Gastrocnemius medialis (tissue), 4 donors: ENCODE measurements at regions of chr15 and their contacts with region 1.

Region 1: DNA sequence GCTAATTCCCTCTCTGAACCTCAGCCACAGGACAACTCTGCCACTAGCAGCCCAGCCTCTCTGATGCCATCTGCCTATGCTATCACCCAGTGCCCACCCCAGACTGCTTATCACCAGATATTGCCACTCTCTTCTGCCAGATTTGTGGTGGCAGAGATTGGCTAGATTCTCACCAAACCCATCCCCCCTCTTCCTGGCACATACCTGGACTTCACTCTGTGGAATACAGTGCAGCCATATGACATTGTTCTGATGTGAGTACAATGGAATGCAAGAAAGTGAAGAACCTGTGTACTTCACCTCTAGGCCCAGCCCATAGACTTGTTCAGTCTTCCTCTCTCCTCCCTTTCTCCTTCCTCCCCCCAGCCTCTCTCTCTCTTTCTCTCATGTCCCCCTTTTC is 46.9 kb upstream of the NTRK3 start:
- DNase-seq: no peak
- ATAC-seq: no peak
- H3K4me3 ChIP-seq: no peak overlapping the region
- H3K27ac ChIP-seq: no peak overlapping the region
- H3K4me1 ChIP-seq: no peaks in the 10 kb centered on the region
- H3K27me3 ChIP-seq: no peaks in the 10 kb centered on the region
- CTCF ChIP-seq: no peak
- POLR2A ChIP-seq: no peak

Region 2: DNA sequence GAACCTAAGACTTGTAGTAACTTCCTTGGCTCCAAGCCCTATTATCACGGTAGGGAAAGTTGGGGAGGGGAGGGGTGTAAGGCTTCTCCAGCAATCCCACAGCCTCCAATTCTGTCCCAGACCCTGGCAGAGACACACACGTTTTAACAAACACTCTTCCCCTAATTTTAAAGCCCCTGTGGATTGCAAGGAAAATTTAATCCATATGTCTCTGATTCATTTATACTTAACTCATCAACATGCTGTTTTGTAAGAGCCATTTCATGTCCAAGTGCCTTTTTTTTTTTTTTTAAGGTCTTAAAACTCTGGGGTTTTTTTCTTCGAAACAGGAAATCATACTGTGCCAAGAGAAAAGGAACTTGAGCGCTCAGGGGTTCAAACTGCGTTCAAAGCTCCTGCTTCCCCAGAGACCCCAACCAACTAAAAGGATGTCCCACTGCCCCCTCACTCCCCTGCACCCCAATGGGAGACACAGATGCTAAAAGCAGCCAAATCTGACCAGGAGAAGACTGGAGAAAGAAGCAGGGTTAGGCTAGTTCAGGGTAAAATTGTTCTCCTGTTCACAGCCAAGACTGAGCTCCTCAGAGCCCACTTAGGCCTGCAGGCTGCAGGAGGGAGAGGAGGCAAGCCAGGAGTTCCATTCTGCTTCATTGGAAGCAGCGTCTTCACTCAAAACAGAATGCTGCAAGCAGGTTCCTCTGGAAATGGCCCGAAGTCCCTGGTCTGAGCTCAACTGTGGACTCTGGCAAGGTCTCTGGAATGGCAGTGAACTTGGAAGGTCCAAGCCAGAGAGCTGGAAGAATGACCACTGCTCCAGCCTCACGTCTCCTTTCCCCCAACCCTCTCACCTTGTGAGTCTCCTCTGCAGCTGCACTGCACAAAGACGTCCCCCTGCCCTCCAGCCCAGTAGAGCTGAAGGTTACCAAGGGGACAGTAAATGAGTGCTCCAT is 219.3 kb before region 1 on chr15:
- in situ Hi-C with region 1: no loop called
- intact Hi-C with region 1: no loop called
- DNase-seq: no peak
- ATAC-seq: peak; percentile 24 to 50
- H3K4me3 ChIP-seq: no peak overlapping the region
- H3K27ac ChIP-seq: no peak overlapping the region
- H3K4me1 ChIP-seq: no peaks in the 10 kb centered on the region
- H3K27me3 ChIP-seq: no peaks in the 10 kb centered on the region
- CTCF ChIP-seq: no peak
- POLR2A ChIP-seq: no peak

Region 3: DNA sequence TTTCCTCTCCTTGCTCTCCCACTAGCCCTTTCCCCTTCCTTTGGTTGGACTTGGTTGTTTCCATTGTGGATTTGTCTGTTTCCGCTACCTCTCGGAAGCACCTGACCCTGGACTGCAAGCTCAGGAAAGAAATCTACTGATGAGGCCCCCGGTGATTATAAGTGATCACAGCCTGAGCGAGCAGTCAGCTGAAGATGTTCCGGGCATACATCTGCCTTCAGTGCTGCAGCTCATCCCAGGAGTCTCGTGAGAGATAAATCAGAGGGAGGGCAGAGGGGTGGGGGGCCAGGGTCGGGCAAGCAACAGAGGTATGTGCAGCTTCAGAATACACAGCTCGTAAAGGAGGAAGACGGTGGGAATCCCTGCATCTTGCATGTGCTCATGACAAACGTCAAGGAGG is 61.7 kb after region 1 on chr15:
- in situ Hi-C with region 1: no loop called
- intact Hi-C with region 1: loop called (anchors 10 kb)
- DNase-seq: no peak
- ATAC-seq: no peak
- H3K4me3 ChIP-seq: no peak overlapping the region
- H3K27ac ChIP-seq: no peak overlapping the region
- H3K4me1 ChIP-seq: no peaks in the 10 kb centered on the region
- H3K27me3 ChIP-seq: no peaks in the 10 kb centered on the region
- CTCF ChIP-seq: no peak
- POLR2A ChIP-seq: no peak